ENCODE measurements at regions of chr17 and their contacts with region 1.

Region 1: DNA sequence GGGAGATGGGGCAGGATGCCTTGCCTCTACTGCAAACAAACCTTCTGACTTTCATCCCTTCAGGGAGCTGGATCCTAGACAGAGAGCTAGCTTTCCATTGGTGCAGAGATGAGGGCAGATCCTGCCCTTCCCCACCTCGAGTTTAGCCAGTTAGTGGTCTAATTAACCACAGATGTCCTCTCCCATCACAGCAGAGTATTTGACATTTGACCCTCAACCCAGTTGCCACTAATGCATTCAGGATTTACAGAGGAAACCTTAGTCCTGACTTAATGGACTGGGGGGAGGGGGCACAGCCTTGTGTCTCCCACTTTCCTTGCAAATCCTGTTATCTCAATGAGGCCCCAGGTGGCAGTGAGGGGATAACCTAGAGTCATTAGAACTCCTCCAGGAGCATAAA is 10.2 kb downstream of the PIP4K2B start:
- DNase-seq: no peak
- H3K4me3 ChIP-seq: no peak overlapping the region
- H3K27ac ChIP-seq: no peak overlapping the region
- H3K4me1 ChIP-seq: peaks cover 20% of the 10 kb centered on the region
- H3K27me3 ChIP-seq: no peaks in the 10 kb centered on the region
- CTCF ChIP-seq: no peak

Region 2: GRCh38 chr17:38685491-38685890 is 103.7 kb before region 1 on chr17:
- CTCF ChIA-PET with region 1: no interaction called
- POLR2A ChIA-PET with region 1: interaction called, 10 read pairs
- intact Hi-C with region 1: no loop called
- DNase-seq: no peak
- H3K4me3 ChIP-seq: no peak overlapping the region
- H3K27ac ChIP-seq: no peak overlapping the region
- H3K4me1 ChIP-seq: 0 out of 2 replicates have a peak, but pooled peaks cover 10% of the 10 kb centered on the region
- H3K27me3 ChIP-seq: no peaks in the 10 kb centered on the region
- CTCF ChIP-seq: no peak

Region 3: DNA sequence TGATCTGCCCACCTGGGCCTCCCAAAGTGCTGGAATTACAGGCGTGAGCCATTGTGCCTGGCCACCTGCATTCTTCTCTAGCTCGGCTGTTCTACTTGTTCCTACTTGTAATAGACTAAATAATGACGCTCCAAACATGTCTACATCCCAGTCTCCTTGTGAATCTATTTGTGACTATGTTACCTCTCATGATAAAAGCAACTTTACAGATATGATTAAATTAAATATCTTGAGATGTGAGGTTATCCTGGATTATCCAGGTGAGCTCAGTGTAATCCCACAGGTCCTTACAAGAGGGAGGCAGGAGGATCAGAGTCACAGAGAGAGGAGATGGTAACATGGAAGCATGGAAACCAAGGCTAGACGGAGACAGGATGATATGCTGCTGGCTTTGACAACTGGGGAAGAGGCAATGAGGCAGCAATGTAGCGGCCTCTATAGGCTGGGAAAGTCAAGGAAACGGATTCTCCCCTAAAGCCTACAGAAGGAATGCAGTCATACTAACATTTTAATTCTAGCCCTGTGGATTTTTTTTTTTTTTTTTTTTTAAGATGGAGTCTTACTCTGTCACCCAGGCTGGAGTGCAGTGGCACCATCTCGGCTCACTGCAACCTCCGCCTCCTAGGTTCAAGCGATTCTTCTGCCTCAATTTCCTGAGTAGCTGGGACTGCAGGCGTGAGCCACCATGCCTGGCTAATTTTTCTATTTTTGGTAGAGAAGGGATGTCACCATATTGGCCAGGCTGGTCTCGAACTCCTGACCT is 75.6 kb after region 1 on chr17:
- CTCF ChIA-PET with region 1: no interaction called
- POLR2A ChIA-PET with region 1: no interaction called
- intact Hi-C with region 1: no loop called
- DNase-seq: no peak
- H3K4me3 ChIP-seq: no peak overlapping the region
- H3K27ac ChIP-seq: no peak overlapping the region
- H3K4me1 ChIP-seq: peaks cover 29% of the 10 kb centered on the region
- H3K27me3 ChIP-seq: no peaks in the 10 kb centered on the region
- CTCF ChIP-seq: no peak

Region 4: GRCh38 chr17:38922538-38923297 is 133.5 kb after region 1 on chr17:
- CTCF ChIA-PET with region 1: no interaction called
- POLR2A ChIA-PET with region 1: no interaction called
- intact Hi-C with region 1: no loop called
- DNase-seq: peak in 1 of 2 experiments; percentile 38
- H3K4me3 ChIP-seq: no peak overlapping the region
- H3K27ac ChIP-seq: peak overlapping the region; percentile 18; the same call in 1 of the 2 replicates
- H3K4me1 ChIP-seq: no peaks in the 10 kb centered on the region
- H3K27me3 ChIP-seq: no peaks in the 10 kb centered on the region
- CTCF ChIP-seq: no peak